ENCODE measurements at regions of chr9 and their contacts with region 1.

Region 1: GRCh38 chr9:132944302-132945185 is at the start of gene TSC1:
- DNase-seq: peak; percentile 99
- H3K4me3 ChIP-seq: peak within 1 kb of the TSS; percentile 88 to 99 (median 96)
- H3K27ac ChIP-seq: peak within 1 kb of the TSS; percentile 92 to 96 (median 94)
- H3K4me1 ChIP-seq: peaks cover 28 to 34% (median 31%) of the 10 kb centered on the region in 4 donors
- H3K27me3 ChIP-seq: no peaks in the 10 kb centered on the region
- CTCF ChIP-seq: peak in 1 of 3 experiments; percentile 5
- EP300 ChIP-seq: no peak
- POLR2A ChIP-seq: no peak
- total RNA-seq, gene TSC1: 25.0 to 36.9 (median 30.6) TPM

Region 2: DNA sequence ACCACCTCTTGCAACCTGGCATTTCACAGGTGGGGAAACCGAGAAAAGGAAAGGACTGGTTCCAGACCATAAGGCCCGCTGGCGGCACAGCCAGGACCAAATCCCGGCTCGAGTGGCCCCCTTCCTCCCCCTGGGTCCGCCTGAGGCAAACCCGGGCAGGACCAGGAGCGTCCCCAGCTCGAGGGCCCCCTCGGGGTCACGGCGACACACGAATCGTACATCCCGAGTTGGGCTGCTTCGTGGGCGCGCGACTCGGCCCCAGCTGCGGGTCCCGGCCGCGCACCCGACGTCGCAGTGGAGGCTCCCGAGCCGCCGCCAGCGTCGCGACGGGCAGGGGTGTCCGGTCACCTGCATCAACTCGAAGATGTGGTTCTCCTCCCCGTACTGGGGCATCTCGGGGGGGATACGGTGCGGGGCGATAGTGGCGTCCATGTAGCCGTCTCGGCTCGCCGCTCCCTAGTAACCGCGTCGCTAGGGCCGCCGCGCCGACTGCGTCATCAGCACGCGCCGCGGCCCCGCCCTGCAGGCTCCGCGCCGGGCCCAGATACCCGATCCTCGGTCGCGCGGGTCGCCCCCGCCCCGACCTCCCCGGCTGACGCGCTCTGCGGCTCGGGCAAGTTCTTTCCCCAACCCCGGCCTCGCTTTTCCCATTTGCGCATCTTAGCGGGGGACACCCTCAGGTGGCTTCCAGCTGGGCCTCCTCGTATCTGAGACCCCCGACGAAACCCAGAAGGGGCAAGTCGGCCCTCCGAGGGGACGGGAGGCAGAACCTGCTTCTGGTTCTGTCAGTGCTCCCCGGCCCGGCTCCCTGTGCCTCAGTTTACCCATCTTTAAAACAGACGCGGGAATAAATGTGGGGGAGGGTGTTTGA is 66.5 kb before region 1 on chr9 and contains the start of gene AK8:
- intact Hi-C with region 1: loop called (anchors 5 kb)
- DNase-seq: no peak
- H3K4me3 ChIP-seq: peak within 1 kb of the TSS; percentile 78 to 93 (median 87)
- H3K27ac ChIP-seq: peak within 1 kb of the TSS; percentile 78 to 90 (median 88)
- H3K4me1 ChIP-seq: peaks cover 11 to 24% (median 16%) of the 10 kb centered on the region in 4 donors
- H3K27me3 ChIP-seq: no peaks in the 10 kb centered on the region
- CTCF ChIP-seq: no peak
- EP300 ChIP-seq: no peak
- POLR2A ChIP-seq: no peak
- total RNA-seq, gene AK8: 0.39 to 1.5 (median 0.90) TPM

Region 3: DNA sequence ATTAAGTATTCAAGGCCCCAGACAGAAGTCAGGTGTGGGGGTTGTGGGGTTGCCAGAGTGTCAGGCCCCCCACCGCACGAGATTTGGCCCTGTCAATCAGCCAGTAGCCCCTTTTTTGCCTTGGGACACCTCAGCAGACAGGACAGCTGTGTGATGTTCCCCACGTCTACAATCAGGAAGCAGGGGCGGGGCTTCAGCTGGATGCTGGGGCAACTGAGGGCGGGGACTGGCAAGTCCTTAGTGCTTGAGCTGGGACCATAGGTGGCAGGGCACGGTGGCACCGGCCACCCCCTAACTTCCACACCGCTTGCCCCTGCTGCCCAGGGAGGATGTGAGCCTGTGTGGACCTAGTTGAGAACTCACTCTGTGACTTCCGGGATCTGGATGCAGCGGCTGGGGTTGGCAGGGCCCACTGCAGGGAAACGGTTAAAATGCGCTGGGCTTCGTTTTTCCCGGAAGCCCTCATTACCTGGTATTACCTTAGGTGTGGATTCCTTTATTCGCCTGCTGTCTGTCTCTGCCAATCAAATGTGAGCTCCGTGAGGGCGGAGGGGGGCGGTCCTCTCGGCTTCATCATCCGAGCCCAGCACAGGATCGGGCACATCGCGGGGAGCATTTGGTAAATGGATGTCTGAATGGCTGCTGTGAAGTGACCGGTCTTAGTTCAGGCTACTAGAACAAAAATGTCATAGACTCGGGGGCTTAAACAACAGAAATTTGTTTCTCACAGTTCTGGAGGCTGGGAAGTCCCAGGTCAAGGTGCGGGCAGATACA is 78.8 kb after region 1 on chr9:
- intact Hi-C with region 1: loop called (anchors 10 kb)
- DNase-seq: no peak
- H3K4me3 ChIP-seq: no peak overlapping the region
- H3K27ac ChIP-seq: no peak overlapping the region
- H3K4me1 ChIP-seq: peaks cover 6 to 10% (median 7%) of the 10 kb centered on the region in 4 donors
- H3K27me3 ChIP-seq: peaks cover 0 to 7% (median 0%) of the 10 kb centered on the region in 4 donors
- CTCF ChIP-seq: no peak
- EP300 ChIP-seq: no peak
- POLR2A ChIP-seq: no peak

Region 4: DNA sequence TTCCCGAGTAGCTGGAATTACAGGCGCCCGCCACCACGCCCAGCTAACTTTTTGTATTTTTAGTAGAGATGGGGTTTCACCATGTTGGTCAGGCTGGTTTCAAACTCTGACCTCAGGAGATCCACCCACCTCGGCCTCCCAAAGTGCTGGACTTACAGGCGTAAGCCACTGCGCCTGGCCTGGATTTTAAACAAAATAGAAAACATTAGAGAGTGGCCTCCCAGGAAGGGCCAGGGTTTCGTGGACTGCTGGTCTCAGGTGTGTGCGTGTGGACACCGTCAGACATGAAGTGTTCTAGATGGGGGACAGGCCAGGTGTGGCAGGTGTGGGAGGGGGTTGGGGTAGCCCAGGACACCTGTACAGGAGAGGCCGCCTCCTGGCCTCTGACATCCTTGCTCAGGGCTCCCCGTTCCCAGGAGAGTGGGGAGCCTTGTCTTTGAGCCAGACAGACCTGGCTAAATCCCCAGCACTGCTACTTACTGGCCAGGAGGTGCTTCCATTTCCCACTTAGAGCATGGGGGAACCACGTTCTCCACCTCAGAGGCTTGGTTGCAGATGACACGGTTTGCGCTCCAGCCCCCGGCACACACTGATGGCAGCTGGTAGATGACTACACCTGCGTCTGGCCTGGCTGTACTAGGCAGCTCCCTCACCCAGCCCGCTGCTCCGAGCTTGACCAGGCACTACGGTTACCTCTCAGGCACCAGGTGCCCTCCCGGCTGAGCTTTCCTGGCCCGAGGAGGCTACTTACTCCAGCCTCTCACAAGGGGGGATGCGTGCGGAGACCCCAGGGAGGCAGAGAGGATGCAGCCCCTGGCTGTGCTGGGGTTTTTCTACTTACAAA is 226.4 kb after region 1 on chr9:
- intact Hi-C with region 1: no loop called
- DNase-seq: no peak
- H3K4me3 ChIP-seq: no peak overlapping the region
- H3K27ac ChIP-seq: no peak overlapping the region
- H3K4me1 ChIP-seq: no peaks in the 10 kb centered on the region
- H3K27me3 ChIP-seq: peaks cover 0 to 17% (median 0%) of the 10 kb centered on the region in 4 donors
- CTCF ChIP-seq: no peak
- EP300 ChIP-seq: no peak
- POLR2A ChIP-seq: no peak

Measured in esophagus muscularis mucosa (tissue), 4 donors.